AG04449 (cell line): ENCODE measurements at regions of chr1 and their contacts with region 1.

Region 1: GRCh38 chr1:159936273-159936904 is 9.0 kb downstream of the IGSF9 start:
- DNase-seq: no peak
- H3K4me3 ChIP-seq: no peak overlapping the region
- CTCF ChIP-seq: peak; percentile 99

Region 2: GRCh38 chr1:159924981-159925712 is 11.2 kb before region 1 on chr1 and contains the start of gene TAGLN2:
- CTCF ChIA-PET with region 1: interaction called, 109 read pairs
- POLR2A ChIA-PET with region 1: interaction called, 4 read pairs
- DNase-seq: no peak
- H3K4me3 ChIP-seq: peak within 1 kb of the TSS; percentile 99
- CTCF ChIP-seq: no peak

Region 3: GRCh38 chr1:160018900-160019299 is 82.5 kb after region 1 on chr1:
- CTCF ChIA-PET with region 1: interaction called, 1,031 read pairs
- POLR2A ChIA-PET with region 1: interaction called, 3 read pairs
- DNase-seq: no peak
- H3K4me3 ChIP-seq: no peak overlapping the region
- CTCF ChIP-seq: no peak